AG04450 (cell line): ENCODE measurements at regions of chr16 and their contacts with region 1.

Region 1: DNA sequence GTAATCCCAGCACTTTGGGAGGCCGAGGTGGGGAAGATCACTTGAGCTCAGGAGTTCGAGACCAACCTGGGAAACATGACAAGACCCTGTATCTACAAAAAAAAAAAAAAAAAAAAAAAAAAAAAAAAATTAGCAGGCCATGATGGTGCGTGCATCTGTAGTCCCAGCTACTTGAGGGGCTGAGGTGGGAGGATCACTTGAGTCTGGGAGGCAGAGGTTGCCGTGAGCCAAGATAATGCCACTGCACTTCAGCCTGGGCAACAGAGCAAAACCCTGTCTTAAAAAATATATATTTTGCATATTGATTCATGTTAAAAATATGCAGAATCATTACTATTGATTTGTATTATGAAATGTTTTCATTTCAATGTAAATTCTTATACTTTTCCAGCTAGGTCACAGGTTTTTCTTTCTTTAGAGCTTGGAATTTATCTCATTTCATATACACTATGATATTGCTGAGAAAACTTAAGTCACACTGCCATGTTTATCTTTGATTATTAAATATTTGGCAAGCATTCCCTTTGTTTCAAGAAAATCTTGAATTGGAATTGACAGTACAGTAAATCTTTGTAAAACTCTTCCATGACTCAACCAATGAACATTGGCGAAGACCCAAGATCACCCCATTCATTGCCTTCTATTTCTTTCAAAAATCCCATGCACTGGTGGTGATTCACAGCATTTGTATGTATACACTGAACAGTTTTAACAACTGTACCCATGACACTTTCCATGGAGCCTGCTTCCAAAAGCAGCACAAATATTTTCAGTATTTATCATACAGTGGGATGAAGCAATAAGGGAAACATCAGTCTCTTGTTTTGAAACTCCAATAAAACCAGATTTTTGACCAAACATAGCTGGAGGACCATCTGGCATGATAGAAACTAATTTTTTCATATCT is 83.5 kb upstream of the TNRC6A start:
- DNase-seq: peak; percentile 99
- H3K4me3 ChIP-seq: no peak overlapping the region
- H3K27ac ChIP-seq: peak overlapping the region; percentile 86
- H3K27me3 ChIP-seq: no peaks in the 10 kb centered on the region
- CTCF ChIP-seq: no peak

Region 2: GRCh38 chr16:24670623-24671454 is 24.8 kb after region 1 on chr16:
- CTCF ChIA-PET with region 1: no interaction called
- POLR2A ChIA-PET with region 1: interaction called, 15 read pairs
- DNase-seq: no peak
- H3K4me3 ChIP-seq: peak overlapping the region; percentile 43
- H3K27ac ChIP-seq: peak overlapping the region; percentile 80
- H3K27me3 ChIP-seq: no peaks in the 10 kb centered on the region
- CTCF ChIP-seq: no peak